ENCODE measurements at regions of chr3 and their contacts with region 1.

Region 1: DNA sequence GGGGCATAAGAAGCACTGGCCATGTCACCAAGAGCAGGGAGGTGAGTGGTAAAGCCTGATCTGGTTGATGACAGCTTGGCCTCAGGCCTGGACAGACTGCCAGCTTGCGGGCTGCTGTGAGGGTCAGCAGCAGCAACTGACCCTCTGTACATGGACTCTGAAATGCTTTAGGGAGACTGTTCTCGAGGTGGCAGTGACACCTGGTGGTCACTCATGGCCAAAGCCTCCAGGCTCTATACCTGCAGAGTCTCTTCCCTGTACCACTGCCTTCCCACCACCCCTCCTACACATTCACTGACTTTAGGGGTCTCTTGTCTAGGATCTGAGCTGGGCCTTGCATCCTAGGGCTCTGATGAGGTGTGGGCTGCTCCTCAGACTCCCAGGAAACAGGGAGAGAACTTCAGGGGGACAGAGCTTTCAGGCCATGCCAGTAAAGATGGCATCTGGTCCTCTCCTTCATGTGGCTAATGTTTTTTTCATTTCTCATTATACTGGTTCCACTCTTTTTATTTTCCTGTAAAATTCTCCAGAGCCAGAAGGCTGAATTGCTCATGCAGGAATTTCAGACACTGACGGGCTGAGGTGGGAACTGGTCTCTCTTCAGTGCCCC is 17.2 kb upstream of the TIMP4 start:
- H3K4me3 ChIP-seq: no peak overlapping the region
- H3K27ac ChIP-seq: no peak overlapping the region
- H3K4me1 ChIP-seq: no peaks in the 10 kb centered on the region; the same call in 1 of the 2 replicates
- CTCF ChIP-seq: peak; percentile 74

Region 2: GRCh38 chr3:12034440-12034839 is 141.5 kb before region 1 on chr3:
- CTCF ChIA-PET with region 1: no interaction called
- POLR2A ChIA-PET with region 1: no interaction called
- H3K4me3 ChIP-seq: no peak overlapping the region
- H3K27ac ChIP-seq: no peak overlapping the region
- H3K4me1 ChIP-seq: no peaks in the 10 kb centered on the region
- CTCF ChIP-seq: no peak

Region 3: GRCh38 chr3:12187448-12188327 is 11.7 kb after region 1 on chr3:
- CTCF ChIA-PET with region 1: interaction called, 13 read pairs
- POLR2A ChIA-PET with region 1: no interaction called
- H3K4me3 ChIP-seq: no peak overlapping the region
- H3K27ac ChIP-seq: no peak overlapping the region
- H3K4me1 ChIP-seq: peaks cover 3% of the 10 kb centered on the region; the same call in 1 of the 2 replicates
- CTCF ChIP-seq: no peak

Measured in HEK293 (cell line).